WTC11 (cell line): ENCODE measurements at regions of chr17 and their contacts with region 1.

Region 1: GRCh38 chr17:63406689-63407330 is 39.3 kb downstream of the CYB561 start:
- DNase-seq: peak; percentile 75
- ATAC-seq: peak; percentile 93
- H3K4me3 Mint-ChIP-seq: no peak overlapping the region
- H3K27ac Mint-ChIP-seq: no peak overlapping the region
- H3K4me1 Mint-ChIP-seq: peaks cover 2% of the 10 kb centered on the region
- H3K27me3 Mint-ChIP-seq: no peaks in the 10 kb centered on the region
- CTCF ChIP-seq: peak; percentile 72

Region 2: DNA sequence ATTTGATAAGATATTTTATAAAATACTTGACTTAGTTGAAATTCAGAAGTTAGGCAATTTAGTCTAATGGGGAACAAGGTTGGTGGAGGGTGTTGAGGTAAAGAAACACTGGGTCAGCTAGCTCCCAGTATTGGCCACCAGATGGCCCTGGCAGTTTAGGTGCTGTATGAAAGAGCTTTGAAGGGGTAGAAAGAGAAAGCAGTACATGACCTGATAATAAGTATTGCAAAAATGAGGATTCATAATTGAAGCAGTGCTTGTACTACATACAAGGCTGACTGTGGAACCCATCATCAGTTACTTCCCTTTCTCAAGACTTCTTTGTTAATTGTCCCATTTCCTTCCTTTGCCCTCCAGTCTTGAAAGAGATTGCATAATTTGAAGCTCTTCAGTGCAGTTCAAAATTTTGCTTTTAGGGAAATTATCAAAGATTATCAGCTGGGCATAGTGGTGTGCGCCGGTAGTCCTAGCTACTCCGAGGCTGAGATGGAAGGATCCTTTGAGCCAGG is 411.4 kb before region 1 on chr17:
- CTCF ChIA-PET with region 1: interaction called, 26 read pairs
- POLR2A ChIA-PET with region 1: interaction called, 3 read pairs
- DNase-seq: peak; percentile 38
- ATAC-seq: peak; percentile 89
- H3K4me3 Mint-ChIP-seq: no peak overlapping the region
- H3K27ac Mint-ChIP-seq: no peak overlapping the region
- H3K4me1 Mint-ChIP-seq: peaks cover 2% of the 10 kb centered on the region; the same call in 1 of the 2 replicates
- H3K27me3 Mint-ChIP-seq: no peaks in the 10 kb centered on the region
- CTCF ChIP-seq: no peak

Region 3: GRCh38 chr17:63116976-63117830 is 289.6 kb before region 1 on chr17:
- CTCF ChIA-PET with region 1: interaction called, 20 read pairs
- POLR2A ChIA-PET with region 1: no interaction called
- DNase-seq: no peak
- ATAC-seq: peak; percentile 65
- H3K4me3 Mint-ChIP-seq: no peak overlapping the region
- H3K27ac Mint-ChIP-seq: no peak overlapping the region
- H3K4me1 Mint-ChIP-seq: no peaks in the 10 kb centered on the region
- H3K27me3 Mint-ChIP-seq: no peaks in the 10 kb centered on the region
- CTCF ChIP-seq: no peak

Region 4: GRCh38 chr17:63395075-63395805 is 11.6 kb before region 1 on chr17:
- CTCF ChIA-PET with region 1: interaction called, 15 read pairs
- POLR2A ChIA-PET with region 1: no interaction called
- DNase-seq: no peak
- ATAC-seq: no peak
- H3K4me3 Mint-ChIP-seq: no peak overlapping the region
- H3K27ac Mint-ChIP-seq: no peak overlapping the region
- H3K4me1 Mint-ChIP-seq: peaks cover 8% of the 10 kb centered on the region
- H3K27me3 Mint-ChIP-seq: no peaks in the 10 kb centered on the region
- CTCF ChIP-seq: no peak

Region 5: DNA sequence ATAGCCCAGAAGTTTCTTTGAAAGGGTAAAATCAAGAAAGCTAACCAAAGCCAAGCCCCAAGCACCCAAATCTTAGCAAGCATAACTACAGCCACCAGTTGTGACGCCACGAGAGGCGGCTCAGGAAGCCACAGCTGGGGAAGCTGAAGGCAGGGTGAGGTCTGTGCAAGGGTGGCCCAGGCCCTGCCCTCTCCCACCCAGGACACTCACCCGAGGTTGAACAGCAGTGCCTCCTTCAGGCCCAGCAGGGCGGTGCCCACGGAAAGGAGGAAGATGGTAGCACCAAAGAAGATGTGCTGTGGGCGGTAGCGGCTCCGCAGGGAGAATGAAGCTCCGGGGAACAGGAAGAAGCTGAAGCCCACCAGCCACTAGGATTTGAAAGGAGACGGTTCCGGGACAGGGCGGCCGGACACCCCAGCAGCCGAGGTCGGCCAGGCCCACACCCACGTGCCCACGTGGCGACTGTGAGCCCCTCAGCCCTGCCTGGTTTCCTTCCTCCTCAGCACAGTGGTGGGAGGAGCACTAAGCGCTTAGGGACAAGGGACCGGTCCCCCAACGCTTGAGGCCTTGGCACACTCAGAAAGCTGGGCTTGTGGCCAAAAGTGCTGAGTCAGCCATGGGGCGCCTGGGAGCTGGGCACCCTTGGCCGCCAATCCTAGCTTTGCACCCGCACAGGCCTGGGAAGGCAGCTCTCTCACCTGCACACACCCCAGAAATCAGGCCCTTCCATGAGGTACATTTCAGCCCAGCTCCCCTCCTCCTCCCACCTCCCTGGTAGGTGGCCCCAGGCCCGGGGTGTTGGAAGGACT is 28.3 kb after region 1 on chr17:
- CTCF ChIA-PET with region 1: interaction called, 10 read pairs
- POLR2A ChIA-PET with region 1: no interaction called
- DNase-seq: peak; percentile 43
- ATAC-seq: no peak
- H3K4me3 Mint-ChIP-seq: no peak overlapping the region
- H3K27ac Mint-ChIP-seq: peak overlapping the region; percentile 36; the same call in 1 of the 2 replicates
- H3K4me1 Mint-ChIP-seq: peaks cover 25% of the 10 kb centered on the region
- H3K27me3 Mint-ChIP-seq: no peaks in the 10 kb centered on the region
- CTCF ChIP-seq: peak; percentile 19; the same call in 1 of the 2 replicates